Activated CD4-positive, alpha-beta T cell treated with anti-CD3 and anti-CD28 coated beads, Interleukin-2, amount 10 ng/mL, durations not matched to agents 7 days and 5 days (primary cell): ENCODE measurements at regions of chr10 and their contacts with region 1.

Region 1: GRCh38 chr10:64444564-64444963 is 923.4 kb downstream of the REEP3 start:
- DNase-seq: no peak
- H3K4me3 Mint-ChIP-seq: no peak overlapping the region
- H3K27ac Mint-ChIP-seq: no peak overlapping the region
- H3K4me1 Mint-ChIP-seq: no peaks in the 10 kb centered on the region
- H3K27me3 Mint-ChIP-seq: no peaks in the 10 kb centered on the region

Region 2: DNA sequence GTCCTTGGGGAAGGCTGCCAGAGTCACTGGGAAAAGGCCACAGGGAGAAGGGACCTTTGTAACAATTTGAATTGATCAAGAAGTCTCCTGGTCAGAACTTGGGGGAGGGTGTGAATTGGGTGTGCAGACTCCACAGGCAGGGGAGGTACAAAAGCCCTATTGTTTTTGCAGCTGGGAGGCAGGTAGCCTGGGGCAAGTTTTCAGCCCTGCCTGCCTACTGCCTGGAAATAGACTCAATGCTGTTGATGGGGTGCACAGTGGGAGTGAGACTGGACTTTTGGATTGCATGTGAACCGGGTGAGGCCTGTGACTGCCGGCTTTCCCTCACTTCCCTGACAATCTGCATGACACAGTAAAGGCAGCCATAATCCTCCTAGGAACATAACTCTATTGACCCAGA is 23.7 kb after region 1 on chr10:
- CTCF ChIA-PET with region 1: no interaction called
- POLR2A ChIA-PET with region 1: no interaction called
- DNase-seq: no peak
- H3K4me3 Mint-ChIP-seq: no peak overlapping the region
- H3K27ac Mint-ChIP-seq: no peak overlapping the region
- H3K4me1 Mint-ChIP-seq: no peaks in the 10 kb centered on the region
- H3K27me3 Mint-ChIP-seq: no peaks in the 10 kb centered on the region

Region 3: GRCh38 chr10:64486149-64486548 is 41.6 kb after region 1 on chr10:
- CTCF ChIA-PET with region 1: no interaction called
- POLR2A ChIA-PET with region 1: interaction called, 11 read pairs
- DNase-seq: no peak
- H3K4me3 Mint-ChIP-seq: no peak overlapping the region
- H3K27ac Mint-ChIP-seq: no peak overlapping the region
- H3K4me1 Mint-ChIP-seq: no peaks in the 10 kb centered on the region
- H3K27me3 Mint-ChIP-seq: no peaks in the 10 kb centered on the region